HepG2 (cell line): ENCODE measurements at regions of chr10 and their contacts with region 1.

Region 1: GRCh38 chr10:31031558-31032257 is at the start of gene ZNF438:
- DNase-seq: peak; percentile 72
- ATAC-seq: peak; percentile 89
- H3K4me3 ChIP-seq: peak within 1 kb of the TSS; percentile 74 to 82 (median 79)
- H3K27ac ChIP-seq: peak within 1 kb of the TSS; percentile 78
- H3K4me1 ChIP-seq: peaks cover 24% of the 10 kb centered on the region
- H3K27me3 ChIP-seq: peaks cover 0 to 5% of the 10 kb centered on the region in 2 experiments; a peak in 1 of 5 replicates
- CTCF ChIP-seq: peak; percentile 84
- EP300 ChIP-seq: 0 out of 4 replicates have a peak, but pooled peaks of 1 of the 2 experiments have one; percentile 20
- POLR2A ChIP-seq: peak in 1 of 2 experiments; percentile 52; a peak in 2 of 4 replicates
- RAD21 ChIP-seq: peak; percentile 63; the same call in 1 of the 2 replicates
- total RNA-seq, gene ZNF438: 0.75 and 1.2 TPM in 2 replicates

Region 2: GRCh38 chr10:31018962-31019361 is 12.7 kb before region 1 on chr10:
- CTCF ChIA-PET with region 1: no interaction called
- POLR2A ChIA-PET with region 1: interaction called, 3 read pairs
- in situ Hi-C with region 1: no loop called
- intact Hi-C with region 1: loop called (anchors 1 kb)
- DNase-seq: peak; percentile 81
- ATAC-seq: peak; percentile 100
- H3K4me3 ChIP-seq: no peak overlapping the region; a peak in 1 of 6 replicates
- H3K27ac ChIP-seq: peak overlapping the region; percentile 65
- H3K4me1 ChIP-seq: peaks cover 30% of the 10 kb centered on the region
- H3K27me3 ChIP-seq: no peaks in the 10 kb centered on the region
- CTCF ChIP-seq: no peak
- EP300 ChIP-seq: peak in 1 of 2 experiments; percentile 11; a peak in 1 of 4 replicates
- POLR2A ChIP-seq: no peak
- RAD21 ChIP-seq: no peak

Region 3: DNA sequence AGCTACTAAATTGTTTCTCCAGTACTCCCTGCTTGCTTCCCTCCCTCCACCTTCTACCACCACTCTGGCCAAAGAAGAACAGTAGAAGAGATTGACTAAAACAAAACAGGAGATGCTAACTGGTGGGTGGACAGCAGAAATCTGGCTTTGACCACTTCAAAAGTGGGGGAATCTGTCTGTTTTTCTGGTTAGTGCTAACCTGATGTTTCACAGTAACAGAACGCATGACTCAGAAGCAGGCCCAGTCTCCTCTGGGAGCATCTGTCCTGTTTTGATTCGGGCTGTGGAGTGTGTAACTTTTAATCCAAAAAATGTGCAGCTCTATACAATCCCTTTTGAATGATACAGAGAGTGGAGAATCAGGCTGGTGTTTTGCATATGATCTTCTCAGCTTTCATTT is 32.6 kb after region 1 on chr10:
- CTCF ChIA-PET with region 1: no interaction called
- POLR2A ChIA-PET with region 1: no interaction called
- in situ Hi-C with region 1: no loop called
- intact Hi-C with region 1: no loop called
- DNase-seq: no peak
- ATAC-seq: no peak
- H3K4me3 ChIP-seq: no peak overlapping the region
- H3K27ac ChIP-seq: no peak overlapping the region
- H3K4me1 ChIP-seq: no peaks in the 10 kb centered on the region
- H3K27me3 ChIP-seq: peaks cover 0 to 8% of the 10 kb centered on the region in 2 experiments; a peak in 1 of 5 replicates
- CTCF ChIP-seq: no peak
- EP300 ChIP-seq: no peak
- POLR2A ChIP-seq: no peak
- RAD21 ChIP-seq: no peak